ENCODE measurements at regions of chr5 and their contacts with region 1.

Region 1: DNA sequence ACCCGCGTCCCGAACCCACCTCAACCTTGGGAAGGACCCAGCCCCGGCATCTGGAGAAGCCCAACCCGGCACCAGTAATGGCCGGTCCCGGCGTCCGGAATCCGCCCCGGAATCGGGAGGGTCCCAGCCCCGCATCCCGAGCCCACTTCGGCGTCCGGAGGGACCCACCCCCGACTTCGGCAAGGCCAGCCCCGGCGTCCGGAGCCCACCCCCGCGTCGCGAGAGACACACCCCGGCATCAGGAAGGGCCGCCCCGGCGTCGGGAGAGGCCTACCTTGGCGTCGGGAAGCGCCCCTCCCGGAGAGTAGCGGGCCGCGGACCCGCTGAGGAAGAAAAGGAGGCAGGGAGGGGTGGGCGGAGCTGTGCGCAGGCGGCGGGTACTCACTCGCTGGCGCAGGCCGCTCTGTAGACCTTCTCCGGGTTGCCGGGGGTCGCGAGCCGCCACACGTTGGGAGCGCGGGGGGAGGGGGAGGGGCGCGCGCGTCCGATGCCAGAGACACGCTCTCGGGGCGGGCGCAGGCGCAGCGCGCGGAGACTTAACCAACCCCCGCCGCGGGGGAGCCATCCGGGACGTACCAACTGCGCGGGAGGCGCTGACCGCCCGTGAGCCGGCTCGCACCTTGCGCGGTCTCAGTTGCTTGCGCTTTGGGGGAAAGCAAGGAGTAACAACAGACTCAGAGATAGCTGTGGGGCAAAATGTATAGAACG is at the start of gene UIMC1:
- DNase-seq: peak; percentile 94
- H3K4me3 ChIP-seq: peak within 1 kb of the TSS; percentile 81 to 99 (median 99)
- H3K27ac ChIP-seq: peak within 1 kb of the TSS; percentile 81
- H3K4me1 ChIP-seq: peaks cover 19% of the 10 kb centered on the region
- H3K27me3 ChIP-seq: no peaks in the 10 kb centered on the region
- CTCF ChIP-seq: no peak
- total RNA-seq, gene UIMC1: 24.8 to 47.0 TPM

Region 2: DNA sequence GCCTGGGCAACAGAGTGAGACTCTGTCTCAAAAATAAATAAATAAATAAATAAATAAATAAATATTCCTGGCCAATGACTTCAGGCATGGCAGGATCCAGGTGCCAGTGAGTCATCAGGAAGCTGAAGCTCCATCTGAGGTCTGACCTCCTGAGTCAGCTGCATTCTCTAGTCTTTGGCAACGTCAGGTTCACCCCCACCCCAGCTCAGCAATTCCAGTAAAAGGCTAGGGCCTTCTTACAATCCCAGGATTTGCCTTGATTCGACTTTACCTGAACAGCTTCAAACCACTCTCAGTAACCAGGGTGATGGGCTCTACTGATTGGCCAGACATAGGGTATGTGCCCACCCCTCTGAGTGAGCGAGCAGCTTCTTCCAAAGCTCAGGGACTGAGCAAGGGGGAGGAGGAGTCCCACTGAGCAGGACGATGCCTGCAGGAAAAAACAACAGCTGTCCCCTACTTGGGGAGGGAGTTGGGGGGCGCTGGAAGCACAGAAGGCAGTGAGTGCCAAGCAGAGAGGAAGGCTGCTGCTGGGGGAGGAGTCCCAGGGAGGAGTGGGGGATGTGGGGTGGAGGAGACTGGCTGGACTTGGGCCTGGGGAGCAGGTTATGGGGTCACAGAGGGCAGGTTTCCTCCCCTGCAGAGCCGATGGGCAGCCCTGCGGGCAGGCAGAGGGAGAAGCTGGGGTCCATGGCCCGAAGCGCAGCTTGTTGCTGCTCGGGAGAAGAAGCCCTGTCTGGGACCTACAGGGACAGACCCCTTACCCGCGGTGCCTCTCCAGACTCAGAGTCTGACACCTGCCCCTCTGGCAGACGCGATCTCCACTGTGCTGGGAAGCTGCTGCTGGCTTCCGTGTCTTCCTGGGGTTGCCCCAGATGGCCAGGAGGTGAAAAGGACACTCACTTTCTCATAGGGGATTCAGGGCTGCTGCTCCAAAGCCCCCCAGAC is 221.9 kb before region 1 on chr5:
- CTCF ChIA-PET with region 1: no interaction called
- dilution Hi-C with region 1: no loop called
- in situ Hi-C with region 1: no loop called
- intact Hi-C with region 1: no loop called
- DNase-seq: peak; percentile 86
- H3K4me3 ChIP-seq: no peak overlapping the region
- H3K27ac ChIP-seq: no peak overlapping the region
- H3K4me1 ChIP-seq: peaks cover 18% of the 10 kb centered on the region
- H3K27me3 ChIP-seq: no peaks in the 10 kb centered on the region
- CTCF ChIP-seq: no peak

Region 3: DNA sequence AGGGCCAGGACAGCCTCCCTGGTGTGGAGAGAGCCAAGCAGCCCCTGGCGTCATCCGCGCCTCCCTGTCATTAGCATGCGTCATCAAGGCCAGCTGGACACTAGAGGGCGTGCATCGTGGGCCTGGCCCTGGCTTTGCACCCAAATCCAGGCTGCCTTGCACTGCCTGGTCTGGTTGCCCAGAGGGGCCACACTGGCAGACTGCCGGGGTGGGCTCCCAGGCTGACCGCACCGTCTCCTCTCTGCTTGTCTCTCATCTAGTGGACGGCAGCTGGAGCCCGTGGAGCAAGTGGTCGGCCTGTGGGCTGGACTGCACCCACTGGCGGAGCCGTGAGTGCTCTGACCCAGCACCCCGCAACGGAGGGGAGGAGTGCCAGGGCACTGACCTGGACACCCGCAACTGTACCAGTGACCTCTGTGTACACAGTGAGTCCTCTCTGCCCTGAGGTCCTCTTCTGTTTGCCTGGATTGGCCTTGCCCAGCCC is 136.3 kb before region 1 on chr5:
- CTCF ChIA-PET with region 1: no interaction called
- dilution Hi-C with region 1: no loop called
- in situ Hi-C with region 1: no loop called
- intact Hi-C with region 1: no loop called
- DNase-seq: no peak
- H3K4me3 ChIP-seq: no peak overlapping the region
- H3K27ac ChIP-seq: no peak overlapping the region
- H3K4me1 ChIP-seq: no peaks in the 10 kb centered on the region
- H3K27me3 ChIP-seq: peaks cover 4% of the 10 kb centered on the region
- CTCF ChIP-seq: peak in 1 of 2 donors; percentile 29

Region 4: GRCh38 chr5:177022384-177023308 is 16.2 kb after region 1 on chr5 and contains the start of gene ZNF346:
- CTCF ChIA-PET with region 1: no interaction called
- dilution Hi-C with region 1: no loop called
- in situ Hi-C with region 1: no loop called
- intact Hi-C with region 1: loop called (anchors 1 kb)
- DNase-seq: peak; percentile 83
- H3K4me3 ChIP-seq: peak within 1 kb of the TSS; percentile 85 to 98 (median 90)
- H3K27ac ChIP-seq: peak within 1 kb of the TSS; percentile 54
- H3K4me1 ChIP-seq: peaks cover 7% of the 10 kb centered on the region
- H3K27me3 ChIP-seq: no peaks in the 10 kb centered on the region
- CTCF ChIP-seq: peak in 1 of 2 donors; percentile 47
- total RNA-seq, gene ZNF346: 16.0 to 16.9 TPM

Region 5: DNA sequence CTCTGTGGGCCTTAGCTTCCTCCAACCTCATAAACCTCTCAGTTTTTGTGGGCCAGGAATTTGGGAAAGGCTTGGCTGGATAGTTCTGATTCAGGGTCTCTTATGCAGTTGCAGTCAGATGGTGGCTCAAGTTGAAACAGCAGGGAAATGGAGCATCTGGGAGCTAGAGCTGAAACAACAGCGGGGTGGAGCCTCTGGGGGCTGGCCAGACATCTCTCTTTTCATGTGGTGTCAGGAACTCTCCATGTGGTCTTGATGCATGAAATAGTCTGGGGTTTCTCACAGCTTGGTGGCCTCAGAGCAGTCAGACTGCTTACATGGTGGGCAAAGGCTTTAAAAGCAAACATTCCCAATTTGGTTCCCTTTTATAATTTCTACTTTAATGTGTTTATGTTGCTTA is 29.6 kb after region 1 on chr5:
- CTCF ChIA-PET with region 1: no interaction called
- dilution Hi-C with region 1: loop called (anchors 5 kb)
- in situ Hi-C with region 1: no loop called
- intact Hi-C with region 1: no loop called
- DNase-seq: no peak
- H3K4me3 ChIP-seq: no peak overlapping the region
- H3K27ac ChIP-seq: no peak overlapping the region
- H3K4me1 ChIP-seq: peaks cover 7% of the 10 kb centered on the region
- H3K27me3 ChIP-seq: no peaks in the 10 kb centered on the region
- CTCF ChIP-seq: no peak

Measured in mammary epithelial cell (primary cell).